Natural killer cell (primary cell): ENCODE measurements at regions of chr5 and their contacts with region 1.

Region 1: DNA sequence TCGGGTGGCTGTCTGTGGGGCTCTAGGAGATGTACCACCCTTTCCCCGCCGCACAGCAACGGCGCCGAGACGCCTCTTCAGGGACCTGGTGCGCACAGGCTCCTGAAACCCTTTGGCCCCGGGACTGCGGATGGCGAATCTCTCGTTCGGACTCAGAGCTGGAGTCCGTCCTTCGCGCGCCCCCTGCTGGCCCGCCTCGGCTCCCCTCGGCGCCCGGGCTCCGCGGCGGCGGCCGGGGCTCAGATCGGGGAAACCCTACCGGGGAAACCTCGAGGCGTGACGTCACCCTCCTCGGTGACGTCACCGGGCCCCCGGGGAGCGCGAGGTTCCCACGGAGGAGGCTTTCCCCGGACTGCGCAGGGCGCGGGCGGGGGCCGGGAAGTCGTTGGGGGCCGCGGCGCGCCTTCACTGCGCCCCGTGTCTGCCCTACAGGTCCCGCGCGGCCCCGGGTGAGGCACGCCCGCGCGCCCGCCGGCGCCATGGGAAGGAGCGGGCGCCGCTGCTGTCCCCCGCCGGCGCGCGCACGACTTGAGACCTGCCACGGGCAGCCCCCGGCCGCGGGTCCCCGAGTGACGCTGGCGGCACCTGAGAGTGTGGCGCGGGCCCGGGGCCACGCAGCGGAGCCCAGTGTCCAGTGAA is 7.9 kb downstream of the PRR7 start:
- DNase-seq: peak; percentile 97 to 99
- ATAC-seq: peak; percentile 57 to 80 (median 63)
- H3K4me3 ChIP-seq: peak overlapping the region; percentile 45
- H3K4me3 Mint-ChIP-seq: peak overlapping the region; percentile 86
- H3K27ac ChIP-seq: peak overlapping the region; percentile 91
- H3K27ac Mint-ChIP-seq: peak overlapping the region; percentile 85 to 90
- H3K4me1 ChIP-seq: peaks cover 36% of the 10 kb centered on the region
- H3K4me1 Mint-ChIP-seq: peaks cover 15 to 31% of the 10 kb centered on the region in 2 donors
- H3K27me3 ChIP-seq: no peaks in the 10 kb centered on the region
- H3K27me3 Mint-ChIP-seq: no peaks in the 10 kb centered on the region
- CTCF ChIP-seq: peak; percentile 77

Region 2: GRCh38 chr5:177303121-177303924 is 151.2 kb before region 1 on chr5 and contains the starts of genes PRELID1 and RAB24:
- intact Hi-C with region 1: loop called (anchors 5 kb)
- DNase-seq: peak; percentile 92
- ATAC-seq: peak; percentile 57 to 82 (median 76)
- H3K4me3 ChIP-seq: peak within 1 kb of the TSS; percentile 93
- H3K4me3 Mint-ChIP-seq: peak within 1 kb of the TSS; percentile 92
- H3K27ac ChIP-seq: peak within 1 kb of the TSS; percentile 76
- H3K27ac Mint-ChIP-seq: peak within 1 kb of the TSS; percentile 89 to 96
- H3K4me1 ChIP-seq: peaks cover 89% of the 10 kb centered on the region
- H3K4me1 Mint-ChIP-seq: peaks cover 72 to 80% of the 10 kb centered on the region in 2 donors
- H3K27me3 ChIP-seq: no peaks in the 10 kb centered on the region
- H3K27me3 Mint-ChIP-seq: no peaks in the 10 kb centered on the region
- CTCF ChIP-seq: peak; percentile 44
- total RNA-seq, gene PRELID1: 76.6 to 99.3 (median 91.6) TPM
- total RNA-seq, gene RAB24: 42.5 to 55.4 (median 49.5) TPM

Region 3: GRCh38 chr5:177317959-177318377 is 136.5 kb before region 1 on chr5:
- intact Hi-C with region 1: loop called (anchors 5 kb)
- DNase-seq: peak; percentile 71 to 88
- ATAC-seq: peak; percentile 82 to 94 (median 89)
- H3K4me3 ChIP-seq: no peak overlapping the region
- H3K4me3 Mint-ChIP-seq: no peak overlapping the region
- H3K27ac ChIP-seq: no peak overlapping the region
- H3K27ac Mint-ChIP-seq: no peak overlapping the region
- H3K4me1 ChIP-seq: peaks cover 23% of the 10 kb centered on the region
- H3K4me1 Mint-ChIP-seq: peaks cover 9 to 11% of the 10 kb centered on the region in 2 donors
- H3K27me3 ChIP-seq: no peaks in the 10 kb centered on the region
- H3K27me3 Mint-ChIP-seq: no peaks in the 10 kb centered on the region
- CTCF ChIP-seq: peak; percentile 86

Region 4: DNA sequence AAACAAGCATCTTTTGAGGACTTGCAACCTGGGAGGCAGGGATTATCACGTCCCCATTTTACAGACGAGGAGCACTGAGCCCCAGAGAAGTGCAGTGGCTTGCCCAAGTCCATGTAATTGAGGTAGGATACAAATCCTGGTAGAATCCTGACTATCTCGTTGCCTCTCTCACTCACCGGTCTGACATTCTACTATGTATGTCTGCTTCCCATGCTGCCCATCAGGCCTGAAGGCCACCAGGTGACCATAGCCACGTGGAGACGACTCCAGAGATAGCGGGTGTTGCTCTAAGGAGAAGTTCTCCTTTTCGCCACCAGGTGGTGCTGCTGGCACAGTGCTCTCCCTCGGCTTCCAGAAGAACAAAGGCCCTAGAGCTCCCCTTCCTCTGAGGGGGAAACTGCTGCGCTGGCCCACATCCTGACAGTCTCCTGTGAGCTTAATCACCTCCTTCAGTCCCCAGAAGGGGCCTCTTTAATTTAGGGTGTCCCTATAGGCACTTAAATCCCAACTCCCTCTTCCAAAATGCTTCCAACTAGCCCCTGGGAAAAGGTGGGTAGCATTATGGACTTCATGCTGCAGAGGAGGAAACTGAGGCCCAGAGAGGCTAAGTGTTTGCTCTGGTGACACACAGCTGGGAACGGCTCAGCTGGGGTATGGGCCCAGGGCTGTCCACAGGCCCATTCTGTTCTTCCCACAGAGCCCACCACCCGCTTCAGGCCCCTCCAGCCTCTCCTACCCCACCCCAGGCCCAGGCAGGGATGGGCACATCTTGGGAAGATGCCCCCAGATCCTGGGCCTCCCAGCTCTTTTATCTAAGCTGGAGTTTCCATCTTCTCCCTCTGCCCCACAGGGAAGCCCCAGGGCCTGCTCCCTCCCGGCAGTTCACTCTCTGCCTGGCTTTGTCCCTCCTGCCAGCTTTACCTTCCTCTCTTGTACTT is 63.9 kb before region 1 on chr5:
- intact Hi-C with region 1: loop called (anchors 1 kb)
- DNase-seq: peak; percentile 83 to 96
- ATAC-seq: peak; percentile 71 to 89 (median 84)
- H3K4me3 ChIP-seq: no peak overlapping the region
- H3K4me3 Mint-ChIP-seq: peak overlapping the region; percentile 52
- H3K27ac ChIP-seq: peak overlapping the region; percentile 79
- H3K27ac Mint-ChIP-seq: peak overlapping the region; percentile 81 to 82
- H3K4me1 ChIP-seq: peaks cover 59% of the 10 kb centered on the region
- H3K4me1 Mint-ChIP-seq: peaks cover 30 to 34% of the 10 kb centered on the region in 2 donors
- H3K27me3 ChIP-seq: no peaks in the 10 kb centered on the region
- H3K27me3 Mint-ChIP-seq: peaks cover 0 to 2% of the 10 kb centered on the region in 2 donors
- CTCF ChIP-seq: peak; percentile 95

Region 5: DNA sequence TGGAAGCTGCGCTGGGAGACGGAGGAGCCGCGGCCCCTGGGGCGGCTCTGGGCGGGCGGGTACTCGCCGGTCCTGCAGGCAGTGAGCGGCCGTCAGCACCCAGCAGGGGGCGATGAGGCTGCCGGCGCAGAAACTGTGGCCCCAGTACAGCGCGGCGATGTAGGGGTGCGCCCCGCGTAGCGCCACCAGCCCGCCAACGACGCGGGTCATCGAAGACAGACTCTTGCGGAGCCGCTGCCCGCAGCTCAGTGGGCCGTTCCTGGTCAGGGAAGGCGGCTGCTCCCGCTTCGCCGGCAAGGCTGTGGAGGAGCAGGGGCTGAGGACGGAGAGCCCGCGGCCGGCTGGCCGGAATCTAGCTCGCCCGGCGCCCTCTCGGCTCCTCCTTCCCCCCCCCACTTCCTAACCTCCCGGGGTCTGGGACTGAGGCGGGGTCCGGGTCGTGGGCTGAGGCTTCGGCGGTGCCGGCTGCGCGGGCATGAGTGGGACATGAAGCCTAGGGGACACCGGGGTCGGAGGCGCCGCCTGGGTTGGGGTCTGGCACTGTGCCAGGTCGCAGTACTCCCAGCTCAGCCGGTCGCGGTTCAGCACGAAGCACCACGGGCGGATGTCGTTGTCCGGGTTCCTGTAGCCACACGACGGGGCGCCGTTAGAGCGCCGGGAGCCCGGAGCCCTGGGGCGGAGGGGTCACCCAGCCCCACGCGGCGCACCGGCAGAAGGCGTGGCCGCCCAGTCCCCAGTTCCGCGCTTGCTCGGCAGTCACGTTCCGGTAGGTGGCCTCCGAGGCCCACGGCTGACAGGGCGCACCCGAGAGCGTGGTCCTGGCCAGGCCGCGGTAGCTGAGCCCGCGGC is 50.5 kb before region 1 on chr5:
- intact Hi-C with region 1: loop called (anchors 1 kb)
- DNase-seq: peak; percentile 81 to 94
- ATAC-seq: peak; percentile 80 to 91 (median 81)
- H3K4me3 ChIP-seq: peak overlapping the region; percentile 36
- H3K4me3 Mint-ChIP-seq: peak overlapping the region; percentile 72
- H3K27ac ChIP-seq: peak overlapping the region; percentile 51
- H3K27ac Mint-ChIP-seq: peak overlapping the region; percentile 62 to 84
- H3K4me1 ChIP-seq: peaks cover 51% of the 10 kb centered on the region
- H3K4me1 Mint-ChIP-seq: peaks cover 37 to 45% of the 10 kb centered on the region in 2 donors
- H3K27me3 ChIP-seq: peaks cover 22% of the 10 kb centered on the region
- H3K27me3 Mint-ChIP-seq: peaks cover 13 to 17% of the 10 kb centered on the region in 2 donors
- CTCF ChIP-seq: peak; percentile 66

Region 6: DNA sequence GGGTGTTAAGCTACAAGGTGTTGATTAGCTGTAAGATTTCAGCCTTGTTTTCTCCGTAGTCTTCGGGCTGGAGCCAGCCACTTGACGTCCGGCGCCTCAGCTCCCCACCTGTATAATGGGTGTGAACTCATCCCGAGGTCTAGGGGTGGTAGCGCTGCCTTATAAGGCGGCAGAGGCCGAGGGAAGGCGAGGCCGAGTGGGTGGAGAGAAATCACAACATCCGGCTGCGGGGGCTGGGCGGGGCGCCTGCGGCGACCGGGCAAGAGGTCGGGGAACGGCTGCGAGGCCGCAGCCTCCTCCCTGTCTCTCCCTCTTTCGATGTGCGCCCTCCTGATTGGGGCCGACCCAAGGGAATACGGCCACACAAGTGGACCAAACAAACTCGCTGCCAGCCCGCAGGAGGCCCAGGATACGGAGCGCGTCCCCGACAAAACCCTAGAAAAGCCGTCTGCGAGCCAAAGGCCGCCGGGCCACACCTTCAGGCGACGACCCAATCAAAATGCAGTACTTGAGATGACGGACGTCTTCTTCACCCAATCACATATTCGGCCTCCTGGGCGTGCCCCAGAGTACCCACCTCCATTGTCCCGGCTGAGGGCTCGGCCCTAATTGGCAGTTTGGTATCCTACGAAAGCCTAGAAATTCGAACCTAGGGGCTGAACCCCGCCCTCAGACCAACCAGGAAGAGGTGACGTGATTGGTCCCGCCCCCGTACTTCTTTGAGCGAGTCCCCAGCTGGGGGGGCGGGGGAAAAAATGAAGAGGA is 28.5 kb before region 1 on chr5:
- intact Hi-C with region 1: loop called (anchors 1 kb)
- DNase-seq: peak; percentile 98 to 100
- ATAC-seq: peak; percentile 75 to 93 (median 80)
- H3K4me3 ChIP-seq: peak overlapping the region; percentile 58
- H3K4me3 Mint-ChIP-seq: peak overlapping the region; percentile 98
- H3K27ac ChIP-seq: peak overlapping the region; percentile 92
- H3K27ac Mint-ChIP-seq: peak overlapping the region; percentile 94 to 99
- H3K4me1 ChIP-seq: peaks cover 52% of the 10 kb centered on the region
- H3K4me1 Mint-ChIP-seq: peaks cover 54 to 64% of the 10 kb centered on the region in 2 donors
- H3K27me3 ChIP-seq: no peaks in the 10 kb centered on the region
- H3K27me3 Mint-ChIP-seq: no peaks in the 10 kb centered on the region
- CTCF ChIP-seq: no peak

Region 7: GRCh38 chr5:177497292-177498033 is 42.9 kb after region 1 on chr5 and contains the start of gene PDLIM7:
- intact Hi-C with region 1: loop called (anchors 1 kb)
- DNase-seq: peak; percentile 90 to 97
- ATAC-seq: peak; percentile 88 to 94 (median 89)
- H3K4me3 ChIP-seq: peak within 1 kb of the TSS; percentile 47
- H3K4me3 Mint-ChIP-seq: peak within 1 kb of the TSS; percentile 82
- H3K27ac ChIP-seq: no peak within 1 kb of the TSS
- H3K27ac Mint-ChIP-seq: peak within 1 kb of the TSS; percentile 47 to 56
- H3K4me1 ChIP-seq: peaks cover 72% of the 10 kb centered on the region
- H3K4me1 Mint-ChIP-seq: peaks cover 18 to 55% of the 10 kb centered on the region in 2 donors
- H3K27me3 ChIP-seq: peaks cover 5% of the 10 kb centered on the region
- H3K27me3 Mint-ChIP-seq: peaks cover 10 to 14% of the 10 kb centered on the region in 2 donors
- CTCF ChIP-seq: no peak
- total RNA-seq, gene PDLIM7: 9.7 to 58.7 (median 14.7) TPM